ENCODE measurements at regions of chr19 and their contacts with region 1.

Region 1: GRCh38 chr19:11035441-11036377 is 53.6 kb upstream of the LDLR start:
- DNase-seq: peak; percentile 92
- ATAC-seq: peak; percentile 98
- H3K4me3 Mint-ChIP-seq: no peak overlapping the region
- H3K27ac Mint-ChIP-seq: peak overlapping the region; percentile 66
- H3K4me1 Mint-ChIP-seq: peaks cover 8% of the 10 kb centered on the region
- H3K27me3 Mint-ChIP-seq: no peaks in the 10 kb centered on the region

Region 2: GRCh38 chr19:10960314-10961072 is 75.2 kb before region 1 on chr19 and contains the start of gene SMARCA4:
- CTCF ChIA-PET with region 1: no interaction called
- DNase-seq: peak; percentile 98
- ATAC-seq: peak; percentile 84
- H3K4me3 Mint-ChIP-seq: peak within 1 kb of the TSS; percentile 87
- H3K27ac Mint-ChIP-seq: peak within 1 kb of the TSS; percentile 87
- H3K4me1 Mint-ChIP-seq: peaks cover 43% of the 10 kb centered on the region
- H3K27me3 Mint-ChIP-seq: no peaks in the 10 kb centered on the region
- total RNA-seq, gene SMARCA4: 107 to 114 TPM

Region 3: DNA sequence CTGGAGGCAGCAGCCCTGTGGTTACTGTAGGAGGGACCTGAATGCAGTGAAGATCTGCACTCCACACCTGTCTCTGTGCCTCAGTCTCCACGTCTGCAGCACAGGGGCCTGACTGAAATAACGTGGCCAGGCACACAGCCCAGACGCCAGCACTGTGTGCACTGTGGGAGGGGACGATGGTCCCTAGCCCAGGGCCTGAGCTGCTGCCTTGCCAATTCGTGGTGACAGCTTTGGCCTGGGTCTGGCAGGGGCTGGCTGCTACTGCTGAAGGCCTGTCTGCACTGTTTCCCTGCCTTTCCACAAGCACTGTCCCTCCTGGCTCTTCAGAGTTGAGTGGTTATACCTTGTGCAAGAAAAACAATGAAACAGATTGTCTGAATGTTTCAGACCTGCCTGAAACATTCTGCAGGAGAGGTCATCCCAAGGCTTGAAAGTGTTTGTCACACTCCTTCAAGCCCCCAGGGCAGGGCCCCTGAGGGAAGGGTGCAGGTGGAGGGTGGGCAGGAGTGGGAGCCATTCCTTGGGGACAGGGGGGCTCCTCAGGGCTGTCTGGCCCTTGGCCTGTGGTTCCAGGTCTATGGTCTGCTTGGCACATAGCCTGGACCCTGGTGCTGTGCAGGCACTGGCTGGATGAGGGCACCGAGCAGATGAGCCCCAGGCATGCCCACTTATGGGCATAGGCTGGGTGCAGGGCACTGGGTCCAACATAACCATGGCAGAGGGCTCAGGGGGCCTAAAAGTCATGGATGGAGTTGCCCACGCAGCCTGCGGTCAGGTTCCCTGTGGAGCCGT is 14.8 kb after region 1 on chr19:
- CTCF ChIA-PET with region 1: interaction called, 10 read pairs
- DNase-seq: no peak
- ATAC-seq: no peak
- H3K4me3 Mint-ChIP-seq: no peak overlapping the region
- H3K27ac Mint-ChIP-seq: peak overlapping the region; percentile 11
- H3K4me1 Mint-ChIP-seq: peaks cover 31% of the 10 kb centered on the region
- H3K27me3 Mint-ChIP-seq: no peaks in the 10 kb centered on the region

Region 4: GRCh38 chr19:11090054-11090900 is 54.6 kb after region 1 on chr19:
- CTCF ChIA-PET with region 1: interaction called, 43 read pairs
- DNase-seq: peak; percentile 99
- ATAC-seq: peak; percentile 82
- H3K4me3 Mint-ChIP-seq: peak overlapping the region; percentile 90
- H3K27ac Mint-ChIP-seq: peak overlapping the region; percentile 99
- H3K4me1 Mint-ChIP-seq: peaks cover 53% of the 10 kb centered on the region
- H3K27me3 Mint-ChIP-seq: no peaks in the 10 kb centered on the region

Region 5: GRCh38 chr19:11096210-11096841 is 60.6 kb after region 1 on chr19:
- CTCF ChIA-PET with region 1: interaction called, 43 read pairs
- DNase-seq: peak; percentile 72
- ATAC-seq: peak; percentile 54
- H3K4me3 Mint-ChIP-seq: peak overlapping the region; percentile 66
- H3K27ac Mint-ChIP-seq: peak overlapping the region; percentile 96
- H3K4me1 Mint-ChIP-seq: peaks cover 69% of the 10 kb centered on the region
- H3K27me3 Mint-ChIP-seq: no peaks in the 10 kb centered on the region

Region 6: DNA sequence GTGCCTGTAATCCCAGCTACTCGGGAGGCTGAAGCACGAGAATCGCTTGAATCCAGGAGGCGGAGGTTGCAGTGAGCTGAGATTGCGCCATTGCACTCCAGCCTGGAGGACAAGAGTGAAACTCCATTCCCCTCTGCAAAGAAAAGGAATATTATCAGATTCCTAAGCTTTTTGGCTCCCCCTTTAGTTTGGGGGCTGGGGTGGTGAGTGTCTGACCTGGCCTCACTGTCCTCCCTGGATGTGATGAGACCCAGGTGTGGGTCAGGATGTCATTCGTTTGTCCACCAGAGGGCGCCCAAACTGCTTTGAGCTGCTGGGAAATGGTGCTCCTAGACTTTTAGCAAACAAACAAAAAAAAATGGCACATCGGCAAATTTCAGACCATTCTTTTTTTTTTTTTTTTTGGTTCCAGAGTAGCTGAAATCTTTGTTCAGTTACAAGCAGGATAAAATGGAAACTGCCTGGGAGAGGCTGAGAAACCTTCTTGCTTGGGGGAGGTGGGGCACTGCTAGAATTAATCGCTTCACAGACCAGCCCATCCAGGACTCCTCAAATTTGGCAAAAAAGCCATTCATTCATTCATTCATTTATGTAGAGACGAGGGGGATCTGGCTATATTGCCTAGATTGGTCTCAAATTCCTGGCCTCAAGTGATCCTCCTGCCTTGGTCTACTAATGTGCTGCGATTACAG is 90.4 kb after region 1 on chr19:
- CTCF ChIA-PET with region 1: interaction called, 31 read pairs
- DNase-seq: peak; percentile 85
- ATAC-seq: peak; percentile 80
- H3K4me3 Mint-ChIP-seq: no peak overlapping the region
- H3K27ac Mint-ChIP-seq: no peak overlapping the region
- H3K4me1 Mint-ChIP-seq: peaks cover 2% of the 10 kb centered on the region
- H3K27me3 Mint-ChIP-seq: no peaks in the 10 kb centered on the region

Region 7: DNA sequence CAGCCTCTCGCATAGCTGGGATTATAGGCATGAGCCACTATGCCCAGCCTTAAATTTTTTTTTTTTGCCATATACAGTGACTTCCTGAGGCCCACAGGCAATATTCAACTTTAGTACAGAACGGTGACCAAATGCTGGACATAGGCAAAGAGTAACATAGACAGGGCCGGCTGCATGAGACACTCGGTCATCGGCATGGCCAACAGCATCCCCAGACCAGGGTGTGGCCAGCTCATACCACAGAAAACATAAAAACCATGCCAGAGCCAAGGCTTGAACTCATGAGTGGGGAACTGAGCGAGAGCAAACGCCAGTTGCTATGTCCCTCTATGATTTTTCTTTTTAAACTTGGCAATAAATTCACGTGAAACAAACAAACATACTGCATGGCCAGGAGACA is 144.6 kb after region 1 on chr19:
- CTCF ChIA-PET with region 1: no interaction called
- DNase-seq: no peak
- ATAC-seq: no peak
- H3K4me3 Mint-ChIP-seq: no peak overlapping the region
- H3K27ac Mint-ChIP-seq: no peak overlapping the region
- H3K4me1 Mint-ChIP-seq: peaks cover 7% of the 10 kb centered on the region
- H3K27me3 Mint-ChIP-seq: peaks cover 3% of the 10 kb centered on the region

Region 8: DNA sequence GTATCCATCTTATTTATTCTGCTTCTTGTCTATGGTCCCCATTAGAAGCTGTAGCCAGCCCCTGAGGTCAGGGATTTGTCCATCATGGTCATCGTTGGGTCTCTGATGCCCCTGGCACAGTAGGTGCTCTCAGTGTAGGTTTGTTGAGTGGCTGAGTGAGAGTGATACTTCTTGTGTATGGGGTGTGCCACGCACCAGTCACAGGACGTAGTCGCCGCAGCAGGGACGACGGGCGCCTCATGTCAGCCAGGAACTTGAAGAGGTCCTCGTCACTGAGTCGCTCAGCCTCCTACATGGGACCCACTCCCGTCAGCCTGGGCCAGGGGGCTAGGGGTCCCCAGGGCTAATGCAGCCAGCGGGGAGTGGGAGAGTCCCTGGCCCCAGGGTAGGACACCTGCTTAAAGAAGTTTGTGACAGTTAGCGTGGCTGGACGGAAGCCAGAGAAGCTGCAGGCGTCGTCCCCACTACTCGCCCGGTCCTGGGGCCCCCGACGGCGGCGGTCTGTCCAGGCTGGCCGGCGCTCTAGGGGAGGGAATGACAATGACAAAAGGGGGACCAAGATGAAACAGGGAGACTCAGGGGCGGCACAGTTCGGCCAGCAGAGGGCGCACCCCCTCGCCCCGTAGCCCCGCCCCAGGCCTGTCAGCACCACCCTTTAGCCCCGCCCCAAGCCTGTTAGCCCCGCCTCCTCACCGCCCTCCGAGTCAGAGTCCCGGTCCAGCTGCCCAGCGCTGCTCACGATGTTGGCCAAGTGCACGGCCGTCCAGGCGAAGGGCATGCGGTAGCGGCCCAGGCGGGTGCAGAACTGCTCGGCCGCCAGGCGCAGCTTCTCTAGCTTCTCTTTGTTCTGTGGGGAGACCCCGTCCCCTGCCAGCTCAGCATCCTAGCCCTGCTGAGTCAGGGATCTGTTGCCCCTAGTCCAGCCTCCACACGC is 207.4 kb after region 1 on chr19:
- CTCF ChIA-PET with region 1: no interaction called
- DNase-seq: peak; percentile 88
- ATAC-seq: peak; percentile 97
- H3K4me3 Mint-ChIP-seq: no peak overlapping the region
- H3K27ac Mint-ChIP-seq: no peak overlapping the region
- H3K4me1 Mint-ChIP-seq: peaks cover 2% of the 10 kb centered on the region
- H3K27me3 Mint-ChIP-seq: peaks cover 7% of the 10 kb centered on the region